Heart right ventricle (tissue), 16 donors: ENCODE measurements at regions of chr6 and their contacts with region 1.

Region 1: GRCh38 chr6:46419576-46420002 is 71.7 kb downstream of the RCAN2 start:
- DNase-seq: peak in 1 of 2 donors; percentile 76
- ATAC-seq: peak in 5 of 8 donors; percentile 42 to 67 (median 58)
- H3K4me3 ChIP-seq: no peak overlapping the region
- H3K27ac ChIP-seq: peak overlapping the region in 4 of 10 donors; percentile 4 to 59 (median 30)
- H3K4me1 ChIP-seq: peaks cover 0 to 46% (median 15%) of the 10 kb centered on the region in 9 donors
- H3K27me3 ChIP-seq: no peaks in the 10 kb centered on the region
- CTCF ChIP-seq: peak; percentile 53 to 93 (median 81)

Region 2: GRCh38 chr6:46486181-46486580 is 66.6 kb after region 1 on chr6:
- intact Hi-C with region 1: loop called in 8 of 10 experiments (anchors 1 to 5 kb)
- DNase-seq: no peak
- ATAC-seq: peak in 3 of 8 donors; percentile 42 to 48 (median 43)
- H3K4me3 ChIP-seq: peak overlapping the region in 2 of 10 donors; percentile 1 to 10
- H3K27ac ChIP-seq: peak overlapping the region in 9 of 10 donors; percentile 24 to 97 (median 87)
- H3K4me1 ChIP-seq: peaks cover 0 to 85% (median 29%) of the 10 kb centered on the region in 9 donors
- H3K27me3 ChIP-seq: peaks cover 0 to 37% (median 0%) of the 10 kb centered on the region in 7 donors
- CTCF ChIP-seq: no peak

Region 3: DNA sequence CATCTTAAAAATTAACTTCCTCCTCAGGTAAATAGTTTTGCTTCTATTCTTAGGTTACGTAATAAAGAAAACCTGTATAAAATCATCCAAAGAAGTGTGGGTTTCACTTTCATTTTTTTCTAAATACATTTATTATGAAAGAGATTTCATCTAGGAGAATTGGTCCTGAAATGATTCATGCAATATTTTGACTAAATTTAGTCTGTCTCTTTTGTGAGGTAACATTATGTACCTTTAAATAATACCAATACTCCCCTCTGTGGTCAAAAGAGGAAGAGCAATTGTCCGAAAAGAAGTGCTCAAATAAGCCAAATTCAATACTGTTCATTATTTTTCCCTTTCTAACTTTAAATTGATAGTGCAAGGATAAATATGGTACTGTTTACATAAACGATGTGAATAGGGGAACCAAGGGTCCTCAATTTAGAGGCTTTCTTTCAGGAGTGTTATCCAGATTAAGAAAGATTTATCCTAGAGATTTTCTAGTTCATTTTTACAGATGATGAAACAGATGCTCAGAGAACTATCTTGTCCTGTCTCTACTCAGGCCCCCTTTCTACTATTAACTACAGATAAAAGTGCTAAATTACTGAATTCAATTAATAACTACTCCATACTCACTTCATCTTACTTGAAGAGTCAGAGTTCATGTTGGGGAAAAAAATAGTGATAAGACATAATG is 206.8 kb after region 1 on chr6:
- intact Hi-C with region 1: loop called (anchors 1 to 5 kb)
- DNase-seq: peak in 1 of 2 donors; percentile 23
- ATAC-seq: peak in 4 of 8 donors; percentile 43 to 69 (median 56)
- H3K4me3 ChIP-seq: no peak overlapping the region
- H3K27ac ChIP-seq: peak overlapping the region in 1 of 10 donors; percentile 1
- H3K4me1 ChIP-seq: peaks cover 0 to 18% (median 8%) of the 10 kb centered on the region in 9 donors
- H3K27me3 ChIP-seq: no peaks in the 10 kb centered on the region
- CTCF ChIP-seq: peak; percentile 24 to 83 (median 65)

Region 4: GRCh38 chr6:46715141-46715540 is 295.6 kb after region 1 on chr6:
- intact Hi-C with region 1: no loop called
- DNase-seq: no peak
- ATAC-seq: no peak
- H3K4me3 ChIP-seq: no peak overlapping the region
- H3K27ac ChIP-seq: peak overlapping the region in 1 of 10 donors; percentile 29
- H3K4me1 ChIP-seq: peaks cover 0 to 13% (median 0%) of the 10 kb centered on the region in 9 donors
- H3K27me3 ChIP-seq: peaks cover 0 to 5% (median under 1%) of the 10 kb centered on the region in 7 donors
- CTCF ChIP-seq: no peak

Region 5: DNA sequence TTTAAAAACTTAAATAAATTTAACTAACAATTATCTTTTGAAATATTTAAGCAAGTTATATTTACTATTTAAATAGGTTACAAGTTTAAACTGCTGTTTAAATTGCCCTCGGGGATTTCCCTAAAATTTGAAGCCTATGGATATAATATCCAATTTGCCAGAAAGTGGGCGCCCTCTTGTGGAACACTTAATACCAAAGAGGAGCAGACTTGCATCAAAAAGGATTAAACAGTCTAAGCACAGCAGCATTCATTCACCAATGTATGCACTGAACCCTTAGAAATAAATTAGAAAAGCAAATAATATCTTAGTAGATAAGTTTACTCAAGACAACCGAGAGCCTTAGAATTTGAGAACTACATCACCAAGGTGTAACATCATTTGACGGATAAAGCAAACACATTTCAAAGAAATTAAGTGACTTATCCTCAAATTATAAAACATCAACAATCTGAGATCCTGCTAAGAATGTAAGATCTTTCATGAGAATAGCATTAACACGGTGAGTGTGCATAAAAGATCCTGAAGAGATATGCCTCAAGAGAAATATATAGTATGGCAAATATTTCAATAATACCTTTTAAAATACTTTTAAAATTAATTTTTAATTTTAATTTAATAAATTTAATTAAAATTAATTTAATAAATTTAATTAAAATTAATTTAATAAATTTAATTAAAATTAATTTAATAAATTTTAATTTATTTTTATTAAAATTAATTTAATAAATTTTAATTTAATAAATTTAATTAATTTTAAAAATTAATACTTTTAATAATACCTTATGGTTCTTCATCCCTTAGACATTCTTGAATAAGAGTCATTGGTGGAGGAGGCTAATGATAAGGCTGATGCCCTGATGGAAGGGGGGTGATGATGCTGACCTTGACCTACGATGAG is 362.1 kb after region 1 on chr6:
- intact Hi-C with region 1: loop called in 3 of 10 experiments (anchors 5 to 10 kb)
- DNase-seq: peak in 1 of 2 donors; percentile 63
- ATAC-seq: no peak
- H3K4me3 ChIP-seq: no peak overlapping the region
- H3K27ac ChIP-seq: no peak overlapping the region
- H3K4me1 ChIP-seq: no peaks in the 10 kb centered on the region
- H3K27me3 ChIP-seq: no peaks in the 10 kb centered on the region
- CTCF ChIP-seq: peak; percentile 43 to 81 (median 71)

Region 6: GRCh38 chr6:47047479-47048407 is 628.2 kb after region 1 on chr6:
- intact Hi-C with region 1: loop called in 3 of 10 experiments (anchors 5 to 10 kb)
- DNase-seq: peak in 1 of 2 donors; percentile 56
- ATAC-seq: peak; percentile 78 to 94 (median 92)
- H3K4me3 ChIP-seq: no peak overlapping the region
- H3K27ac ChIP-seq: peak overlapping the region in 3 of 10 donors; percentile 36 to 54 (median 49)
- H3K4me1 ChIP-seq: peaks cover 0 to 25% (median 9%) of the 10 kb centered on the region in 9 donors
- H3K27me3 ChIP-seq: no peaks in the 10 kb centered on the region
- CTCF ChIP-seq: peak; percentile 65 to 90 (median 78)